ENCODE measurements at regions of chr9 and their contacts with region 1.

Region 1: DNA sequence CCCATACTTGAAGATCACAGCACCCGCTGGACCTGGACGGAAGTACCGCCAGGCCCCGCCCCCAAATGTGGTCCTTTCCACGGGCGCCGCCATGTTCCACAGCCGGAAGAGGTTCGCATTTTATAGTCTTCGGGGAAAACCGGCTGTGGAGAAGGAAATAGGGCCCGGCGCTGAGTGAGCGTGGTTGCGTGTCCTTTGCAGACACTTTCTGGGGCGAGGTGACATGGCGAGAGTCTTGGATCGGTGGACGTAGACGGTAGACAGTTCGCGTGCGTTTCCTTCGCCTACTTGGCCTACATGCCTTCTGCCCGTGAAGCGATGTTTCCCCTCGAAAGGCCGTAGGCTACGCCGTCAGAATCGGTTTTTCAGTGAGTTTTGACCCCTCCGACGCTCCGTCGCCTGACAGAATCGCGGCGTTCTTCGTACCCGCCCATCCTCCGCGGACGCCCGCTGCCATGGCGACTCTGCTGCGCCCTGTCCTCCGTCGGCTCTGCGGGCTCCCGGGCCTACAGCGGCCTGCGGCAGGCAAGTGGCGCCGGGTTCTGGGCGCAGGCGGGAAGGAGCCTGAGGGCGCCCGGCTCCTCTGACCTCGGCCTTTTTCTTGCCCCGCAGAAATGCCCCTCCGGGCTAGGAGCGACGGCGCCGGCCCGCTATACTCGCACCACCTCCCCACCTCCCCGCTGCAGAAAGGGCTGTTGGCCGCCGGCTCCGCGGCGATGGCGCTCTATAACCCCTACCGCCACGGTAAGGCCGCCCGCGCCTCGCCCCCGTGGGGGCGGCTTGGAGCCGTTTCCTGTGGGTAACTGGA is at the starts of genes COQ4 and TRUB2:
- DNase-seq: peak; percentile 96
- ATAC-seq: peak; percentile 88
- H3K4me3 Mint-ChIP-seq: peak within 1 kb of the TSS; percentile 92
- H3K27ac Mint-ChIP-seq: peak within 1 kb of the TSS; percentile 94
- H3K4me1 Mint-ChIP-seq: peaks cover 29% of the 10 kb centered on the region
- H3K27me3 Mint-ChIP-seq: no peaks in the 10 kb centered on the region
- total RNA-seq, gene COQ4: 29.8 to 41.1 TPM
- total RNA-seq, gene TRUB2: 22.3 to 34.2 TPM

Region 2: GRCh38 chr9:128296337-128297220 is 26.0 kb before region 1 on chr9:
- CTCF ChIA-PET with region 1: interaction called, 10 read pairs
- DNase-seq: no peak
- ATAC-seq: no peak
- H3K4me3 Mint-ChIP-seq: no peak overlapping the region
- H3K27ac Mint-ChIP-seq: no peak overlapping the region
- H3K4me1 Mint-ChIP-seq: peaks cover 10% of the 10 kb centered on the region
- H3K27me3 Mint-ChIP-seq: no peaks in the 10 kb centered on the region

Measured in activated CD8-positive, alpha-beta memory T cell treated with anti-CD3 and anti-CD28 coated beads, Interleukin-2, amount 10 ng/mL, durations not matched to agents 7 days and 5 days (primary cell).